Activated CD4-positive, alpha-beta T cell treated with anti-CD3 and anti-CD28 coated beads, Interleukin-2, amount 10 ng/mL, durations not matched to agents 24 days and 14 days (primary cell): ENCODE measurements at regions of chr1 and their contacts with region 1.

Region 1: GRCh38 chr1:119885903-119886783 is 10.2 kb downstream of the ADAM30 start:
- DNase-seq: peak; percentile 89
- H3K4me3 Mint-ChIP-seq: no peak overlapping the region
- H3K27ac Mint-ChIP-seq: no peak overlapping the region
- H3K4me1 Mint-ChIP-seq: no peaks in the 10 kb centered on the region
- H3K27me3 Mint-ChIP-seq: peaks cover 16% of the 10 kb centered on the region

Region 2: GRCh38 chr1:119582801-119583200 is 303.3 kb before region 1 on chr1:
- intact Hi-C with region 1: no loop called
- DNase-seq: peak; percentile 67
- H3K4me3 Mint-ChIP-seq: no peak overlapping the region
- H3K27ac Mint-ChIP-seq: no peak overlapping the region
- H3K4me1 Mint-ChIP-seq: no peaks in the 10 kb centered on the region
- H3K27me3 Mint-ChIP-seq: peaks cover 2% of the 10 kb centered on the region

Region 3: DNA sequence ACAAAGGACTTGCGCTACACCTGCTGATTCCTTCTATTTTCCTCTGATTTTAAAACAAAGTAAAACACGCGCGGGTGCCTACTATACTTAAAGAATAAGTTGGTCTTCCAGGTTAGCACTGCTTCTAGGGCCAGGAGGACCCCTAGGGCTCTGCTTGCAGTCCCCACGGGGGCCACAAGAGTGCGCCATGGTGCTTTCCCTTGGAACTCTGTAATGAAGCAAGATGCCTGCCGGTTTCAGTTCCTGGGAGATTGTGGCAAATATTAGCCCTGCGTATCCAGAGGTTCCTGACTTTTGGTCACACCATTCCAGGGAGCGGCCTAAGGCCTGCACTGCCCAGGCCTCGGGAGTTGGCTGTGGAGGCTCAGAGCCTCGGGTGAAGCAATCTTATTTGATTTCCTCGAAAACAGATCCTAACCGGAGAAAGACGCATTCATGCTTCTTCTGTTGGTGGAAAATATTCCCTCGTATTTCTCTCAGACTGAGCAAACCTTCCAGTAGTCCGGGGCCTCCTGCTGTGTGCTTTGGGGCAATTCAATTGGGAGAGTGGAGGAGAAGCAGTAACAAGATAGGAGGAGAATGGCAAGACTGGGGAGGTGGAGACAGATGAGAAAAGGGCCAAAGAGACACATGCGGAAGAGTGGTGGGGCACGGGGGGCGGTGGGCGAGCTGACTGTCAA is 15.1 kb before region 1 on chr1:
- intact Hi-C with region 1: no loop called
- DNase-seq: peak; percentile 93
- H3K4me3 Mint-ChIP-seq: peak overlapping the region; percentile 36
- H3K27ac Mint-ChIP-seq: no peak overlapping the region
- H3K4me1 Mint-ChIP-seq: peaks cover 11% of the 10 kb centered on the region
- H3K27me3 Mint-ChIP-seq: peaks cover 34% of the 10 kb centered on the region

Region 4: DNA sequence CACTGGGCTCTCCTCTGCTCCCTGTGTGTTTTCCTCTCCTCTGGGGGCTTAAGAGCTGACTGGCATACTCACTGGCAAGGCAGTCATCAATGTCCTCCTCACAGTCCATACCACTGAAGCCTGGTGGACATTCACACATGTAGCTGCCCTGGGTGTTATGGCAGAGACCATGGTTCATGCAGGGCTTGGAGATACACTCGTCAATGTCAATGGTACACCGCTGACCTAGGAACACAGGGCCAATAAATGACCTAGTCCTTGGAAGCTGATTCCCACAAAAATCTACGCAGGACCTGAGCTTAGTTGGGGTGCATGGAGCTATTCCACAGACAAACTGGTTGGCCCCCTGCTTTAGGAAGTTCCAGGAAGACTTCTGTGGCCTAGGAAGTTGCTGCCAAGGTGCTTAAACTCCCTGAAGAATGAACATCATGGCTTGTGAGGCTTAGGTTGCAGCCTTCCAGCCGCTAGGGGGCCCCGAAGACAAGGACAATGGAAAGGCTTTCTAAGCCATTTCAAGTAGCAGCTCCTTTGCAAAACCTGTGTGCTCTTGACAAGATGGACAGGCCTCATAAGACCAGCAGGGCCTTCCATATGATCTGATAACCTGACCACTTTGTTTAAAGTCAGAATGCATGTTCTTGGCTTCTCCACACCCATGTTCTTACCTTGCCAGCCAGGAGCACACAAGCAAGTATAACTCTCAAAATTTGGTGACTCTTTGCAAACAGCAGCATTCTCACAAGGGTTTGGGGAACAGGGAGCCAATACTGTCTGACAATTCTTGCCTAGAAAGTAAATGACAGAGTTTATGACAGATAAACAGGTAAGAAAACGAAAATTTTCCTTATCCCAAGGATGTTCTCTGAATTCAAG is 62.4 kb after region 1 on chr1:
- intact Hi-C with region 1: loop called (anchors 5 kb)
- DNase-seq: peak; percentile 92
- H3K4me3 Mint-ChIP-seq: no peak overlapping the region
- H3K27ac Mint-ChIP-seq: no peak overlapping the region
- H3K4me1 Mint-ChIP-seq: peaks cover 6% of the 10 kb centered on the region
- H3K27me3 Mint-ChIP-seq: no peaks in the 10 kb centered on the region